OCI-LY7 (cell line): ENCODE measurements at regions of chr10 and their contacts with region 1.

Region 1: GRCh38 chr10:90138844-90139243 is 437.5 kb downstream of the KIF20B start:
- DNase-seq: peak; percentile 47
- H3K4me3 ChIP-seq: no peak overlapping the region
- H3K27ac ChIP-seq: no peak overlapping the region
- H3K4me1 ChIP-seq: no peaks in the 10 kb centered on the region
- CTCF ChIP-seq: peak; percentile 78

Region 2: GRCh38 chr10:89904755-89905154 is 234.1 kb before region 1 on chr10:
- CTCF ChIA-PET with region 1: no interaction called
- POLR2A ChIA-PET with region 1: no interaction called
- intact Hi-C with region 1: no loop called
- DNase-seq: no peak
- H3K4me3 ChIP-seq: no peak overlapping the region
- H3K27ac ChIP-seq: no peak overlapping the region
- H3K4me1 ChIP-seq: no peaks in the 10 kb centered on the region
- CTCF ChIP-seq: no peak

Region 3: DNA sequence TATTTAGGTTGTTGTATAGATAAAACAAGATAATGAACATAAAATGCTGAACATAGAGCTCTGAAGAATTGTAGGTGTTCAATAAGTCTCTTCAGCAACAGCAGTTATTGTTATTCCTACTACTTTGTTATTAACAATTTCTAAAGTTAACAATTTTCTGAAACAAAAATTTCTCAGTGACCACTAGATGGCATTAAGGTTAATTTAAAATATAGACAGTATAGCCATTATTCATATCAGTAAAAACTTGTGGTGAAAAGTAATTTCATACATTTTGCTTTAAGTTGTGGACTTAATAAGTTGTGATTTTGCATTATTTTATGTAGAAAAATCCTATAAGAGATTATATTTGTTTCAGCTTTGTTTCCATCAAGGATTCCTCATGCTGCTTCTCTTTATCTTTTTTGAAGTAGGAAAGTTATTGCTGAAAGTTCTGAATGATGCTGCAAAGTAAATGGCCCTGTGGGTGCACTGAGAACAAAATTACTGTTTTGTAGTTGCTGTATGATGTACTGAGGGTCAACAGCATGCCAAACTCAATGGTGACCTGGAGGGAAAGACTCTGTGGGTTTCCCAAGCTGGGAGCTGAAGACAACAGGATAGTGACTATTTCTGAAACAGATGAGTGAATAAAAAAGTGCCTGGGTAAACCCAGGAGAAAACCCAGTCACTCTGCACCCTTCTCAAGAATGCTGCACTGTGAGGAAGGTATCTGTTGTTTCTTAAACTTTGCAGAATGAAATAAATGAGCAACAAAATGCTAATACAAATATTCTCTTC is 183.9 kb before region 1 on chr10:
- CTCF ChIA-PET with region 1: no interaction called
- POLR2A ChIA-PET with region 1: interaction called, 4 read pairs
- intact Hi-C with region 1: loop called (anchors 1 kb)
- DNase-seq: peak; percentile 10
- H3K4me3 ChIP-seq: no peak overlapping the region
- H3K27ac ChIP-seq: no peak overlapping the region
- H3K4me1 ChIP-seq: no peaks in the 10 kb centered on the region
- CTCF ChIP-seq: peak; percentile 87

Region 4: DNA sequence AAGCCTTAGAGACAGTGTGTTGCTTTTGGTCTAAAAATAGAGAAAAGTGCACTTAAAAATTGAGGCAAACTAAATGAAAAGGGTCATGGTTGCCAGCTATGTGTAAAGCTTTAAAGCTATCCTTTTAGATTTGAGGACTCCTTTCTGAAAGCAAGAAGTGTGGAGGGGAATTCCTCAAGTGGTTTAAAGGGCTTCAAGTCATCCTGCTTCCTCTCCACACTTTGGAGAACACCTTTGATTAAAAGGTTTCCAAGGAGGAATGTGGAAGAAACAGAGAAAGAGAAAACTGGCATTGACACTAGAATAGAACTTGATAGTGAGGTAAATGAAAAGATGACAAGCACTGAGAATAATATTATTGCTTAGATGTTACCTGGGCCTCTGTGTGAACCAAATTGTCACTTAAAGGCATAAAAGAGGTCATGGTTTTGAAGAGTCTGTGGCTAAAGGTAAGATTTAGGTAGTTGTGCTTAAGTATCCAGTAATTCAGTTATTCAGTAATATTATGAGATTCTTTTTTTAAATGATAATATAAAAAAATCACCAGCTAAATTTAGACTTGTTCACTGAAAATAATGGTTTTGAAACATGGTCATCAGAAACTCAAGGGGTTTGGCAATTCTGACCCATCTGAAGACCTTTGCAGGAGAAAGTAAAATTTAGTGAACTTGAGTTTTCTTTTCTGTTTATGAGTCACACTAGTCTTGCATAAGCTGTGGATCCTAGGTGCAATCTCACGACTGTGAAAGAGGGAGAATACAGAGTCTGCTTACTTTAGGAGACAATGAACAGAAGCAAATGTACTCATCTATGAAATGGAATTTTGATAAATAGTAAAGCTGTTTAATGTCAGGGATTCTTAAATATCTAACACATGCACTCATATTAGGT is 28.6 kb after region 1 on chr10:
- CTCF ChIA-PET with region 1: no interaction called
- POLR2A ChIA-PET with region 1: no interaction called
- intact Hi-C with region 1: no loop called
- DNase-seq: no peak
- H3K4me3 ChIP-seq: no peak overlapping the region
- H3K27ac ChIP-seq: no peak overlapping the region
- H3K4me1 ChIP-seq: no peaks in the 10 kb centered on the region
- CTCF ChIP-seq: no peak